ENCODE measurements at regions of chr1 and their contacts with region 1.

Region 1: GRCh38 chr1:13830616-13831280 is 130.8 kb downstream of the PRDM2 start:
- DNase-seq: peak; percentile 63
- ATAC-seq: peak; percentile 50 to 74

Region 2: DNA sequence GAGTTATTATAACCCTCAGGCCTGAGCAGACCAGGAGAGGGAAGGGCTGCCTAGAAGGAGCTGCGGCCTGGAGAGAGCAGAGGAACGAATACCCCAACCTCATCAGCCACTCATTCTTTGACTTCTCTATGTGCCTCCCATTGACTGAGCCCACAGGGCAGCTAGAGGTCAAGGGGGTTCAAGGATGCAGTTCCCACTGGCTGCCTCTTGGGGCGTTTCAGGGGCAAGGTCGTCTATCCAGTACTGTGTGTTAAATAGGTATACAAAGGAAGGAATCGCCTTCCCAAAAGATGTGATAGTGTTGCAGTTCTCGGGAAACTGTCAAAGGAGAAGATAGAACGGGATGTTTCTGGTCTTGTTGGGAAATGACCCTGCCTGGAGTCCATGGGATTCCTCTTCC is 119.9 kb after region 1 on chr1:
- intact Hi-C with region 1: loop called in 1 of 2 experiments (anchors 10 kb)
- DNase-seq: no peak
- ATAC-seq: no peak

Region 3: DNA sequence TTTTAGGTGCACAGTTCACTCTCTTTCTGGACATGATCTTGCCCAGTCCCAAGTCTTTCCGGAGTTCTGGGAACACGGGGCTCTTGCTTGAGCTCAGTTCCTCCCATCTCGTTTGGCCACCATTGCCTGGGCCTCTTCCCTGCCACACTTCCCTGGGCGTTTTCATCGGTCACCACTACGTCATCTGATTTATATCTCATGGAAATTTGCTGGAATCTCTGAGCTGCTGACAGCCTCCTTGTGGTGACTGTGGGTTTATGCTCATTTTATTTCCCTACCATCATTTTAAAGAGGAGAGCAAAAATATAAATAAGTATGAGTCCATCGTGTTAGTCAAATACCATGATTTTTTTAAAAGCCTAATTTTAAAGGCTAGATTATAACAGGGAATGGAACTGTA is 318.7 kb after region 1 on chr1:
- intact Hi-C with region 1: no loop called
- DNase-seq: no peak
- ATAC-seq: no peak

Measured in left cardiac atrium (tissue), 4 donors.